Breast epithelium (tissue), 4 donors: ENCODE measurements at regions of chr6 and their contacts with region 1.

Region 1: DNA sequence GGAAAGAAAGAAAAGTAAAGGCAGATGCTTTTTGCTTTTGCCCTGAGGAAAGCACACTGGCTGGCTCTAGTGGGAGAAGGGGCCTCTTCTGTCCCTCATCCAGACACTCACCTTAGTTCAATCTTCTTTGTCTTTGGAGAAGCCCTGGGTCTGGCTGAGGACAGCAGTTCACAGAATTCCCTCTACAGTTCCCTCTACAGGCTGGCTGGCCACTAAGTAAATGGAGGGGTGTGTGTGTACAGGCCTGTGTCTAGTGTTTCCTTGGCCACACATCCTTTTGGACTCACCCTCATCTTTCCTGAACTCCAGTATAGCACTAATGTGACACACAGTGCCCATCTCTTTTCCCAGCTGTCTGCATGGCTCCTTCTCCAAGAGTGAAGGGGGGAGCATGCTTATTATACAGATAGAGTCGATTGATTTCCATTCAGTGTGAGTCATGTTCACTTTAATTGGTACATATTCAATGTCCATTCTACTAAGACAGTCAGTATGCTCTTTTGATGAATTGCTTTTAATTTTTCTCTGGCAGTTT is 26.0 kb upstream of the CLVS2 start:
- DNase-seq: no peak
- H3K4me3 ChIP-seq: no peak overlapping the region
- H3K27ac ChIP-seq: no peak overlapping the region
- H3K4me1 ChIP-seq: no peaks in the 10 kb centered on the region
- H3K27me3 ChIP-seq: no peaks in the 10 kb centered on the region
- CTCF ChIP-seq: no peak
- POLR2A ChIP-seq: no peak

Region 2: GRCh38 chr6:122833021-122833491 is 137.0 kb before region 1 on chr6:
- intact Hi-C with region 1: no loop called
- DNase-seq: no peak
- H3K4me3 ChIP-seq: no peak overlapping the region
- H3K27ac ChIP-seq: no peak overlapping the region
- H3K4me1 ChIP-seq: no peaks in the 10 kb centered on the region
- H3K27me3 ChIP-seq: no peaks in the 10 kb centered on the region
- CTCF ChIP-seq: no peak
- POLR2A ChIP-seq: no peak

Region 3: DNA sequence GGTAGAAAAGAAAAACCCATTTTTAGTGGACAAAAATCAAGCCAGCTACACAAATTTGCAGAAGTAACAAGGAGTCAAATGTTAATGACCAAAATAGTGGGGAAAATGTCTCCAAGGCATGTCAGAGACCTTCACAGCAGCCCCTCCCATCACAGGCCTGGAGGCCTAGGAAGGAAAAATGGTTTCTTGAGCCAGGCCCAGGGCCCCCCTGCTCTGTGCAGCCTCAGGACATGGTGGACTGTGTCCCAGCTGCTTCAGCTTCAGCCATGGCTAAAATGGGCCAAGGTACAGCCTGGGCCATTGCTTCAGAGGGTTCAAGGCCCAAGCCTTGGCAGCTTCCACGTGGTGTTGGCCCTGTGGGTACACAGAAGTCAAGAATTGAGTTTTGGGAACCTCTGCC is 56.5 kb before region 1 on chr6:
- intact Hi-C with region 1: loop called (anchors 2 kb)
- DNase-seq: no peak
- H3K4me3 ChIP-seq: no peak overlapping the region
- H3K27ac ChIP-seq: no peak overlapping the region
- H3K4me1 ChIP-seq: no peaks in the 10 kb centered on the region
- H3K27me3 ChIP-seq: no peaks in the 10 kb centered on the region
- CTCF ChIP-seq: no peak
- POLR2A ChIP-seq: no peak

Region 4: GRCh38 chr6:123016431-123017103 is 46.5 kb after region 1 on chr6:
- intact Hi-C with region 1: no loop called
- DNase-seq: no peak
- H3K4me3 ChIP-seq: no peak overlapping the region
- H3K27ac ChIP-seq: no peak overlapping the region
- H3K4me1 ChIP-seq: no peaks in the 10 kb centered on the region
- H3K27me3 ChIP-seq: no peaks in the 10 kb centered on the region
- CTCF ChIP-seq: no peak
- POLR2A ChIP-seq: no peak

Region 5: GRCh38 chr6:124066946-124067552 is 1097.0 kb after region 1 on chr6:
- intact Hi-C with region 1: no loop called
- DNase-seq: no peak
- H3K4me3 ChIP-seq: no peak overlapping the region
- H3K27ac ChIP-seq: no peak overlapping the region
- H3K4me1 ChIP-seq: no peaks in the 10 kb centered on the region
- H3K27me3 ChIP-seq: no peaks in the 10 kb centered on the region
- CTCF ChIP-seq: no peak
- POLR2A ChIP-seq: no peak